K562 (cell line): ENCODE measurements at regions of chr20 and their contacts with region 1.

Region 1: GRCh38 chr20:13898011-13898612 is 92.3 kb downstream of the SEL1L2 start:
- DNase-seq: peak in 2 of 4 experiments; percentile 15 to 21
- ATAC-seq: peak; percentile 84
- H3K4me3 ChIP-seq: no peak overlapping the region
- H3K27ac ChIP-seq: no peak overlapping the region
- H3K4me1 ChIP-seq: no peaks in the 10 kb centered on the region; a peak in 1 of 5 replicates
- H3K27me3 ChIP-seq: no peaks in the 10 kb centered on the region
- CTCF ChIP-seq: peak; percentile 33 to 47 (median 42); a peak in 3 of 6 replicates
- EP300 ChIP-seq: no peak
- POLR2A ChIP-seq: no peak
- RAD21 ChIP-seq: peak; percentile 45 to 53

Region 2: GRCh38 chr20:13831476-13831875 is 66.6 kb before region 1 on chr20:
- CTCF ChIA-PET with region 1: no interaction called
- POLR2A ChIA-PET with region 1: no interaction called
- in situ Hi-C with region 1: no loop called
- intact Hi-C with region 1: no loop called
- DNase-seq: no peak
- ATAC-seq: no peak
- H3K4me3 ChIP-seq: no peak overlapping the region
- H3K27ac ChIP-seq: no peak overlapping the region
- H3K4me1 ChIP-seq: no peaks in the 10 kb centered on the region
- H3K27me3 ChIP-seq: no peaks in the 10 kb centered on the region
- CTCF ChIP-seq: no peak
- EP300 ChIP-seq: no peak
- POLR2A ChIP-seq: no peak
- RAD21 ChIP-seq: no peak

Region 3: DNA sequence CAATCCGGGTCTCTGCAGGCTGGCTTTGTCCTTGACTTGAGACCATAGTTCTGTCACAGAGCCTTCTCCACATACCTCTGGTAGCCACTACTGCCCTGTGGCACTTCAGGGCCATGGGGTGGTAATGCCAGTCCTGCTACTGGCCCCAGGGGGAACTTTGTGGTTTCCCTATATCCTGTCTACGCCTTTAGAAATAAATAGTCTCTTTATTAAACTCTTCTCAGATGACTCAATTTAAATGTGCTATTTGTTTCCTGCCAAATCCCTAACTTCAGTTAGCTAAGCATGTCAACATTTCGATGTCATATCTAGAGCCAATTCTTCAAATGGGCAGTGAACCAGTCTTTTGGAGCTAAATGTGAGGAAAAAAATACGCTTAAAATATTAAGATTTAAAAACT is 32.2 kb after region 1 on chr20:
- CTCF ChIA-PET with region 1: no interaction called
- POLR2A ChIA-PET with region 1: no interaction called
- in situ Hi-C with region 1: no loop called
- intact Hi-C with region 1: no loop called
- DNase-seq: no peak
- ATAC-seq: no peak
- H3K4me3 ChIP-seq: no peak overlapping the region
- H3K27ac ChIP-seq: no peak overlapping the region
- H3K4me1 ChIP-seq: no peaks in the 10 kb centered on the region; a peak in 2 of 5 replicates
- H3K27me3 ChIP-seq: no peaks in the 10 kb centered on the region
- CTCF ChIP-seq: no peak
- EP300 ChIP-seq: no peak
- POLR2A ChIP-seq: no peak
- RAD21 ChIP-seq: no peak

Region 4: DNA sequence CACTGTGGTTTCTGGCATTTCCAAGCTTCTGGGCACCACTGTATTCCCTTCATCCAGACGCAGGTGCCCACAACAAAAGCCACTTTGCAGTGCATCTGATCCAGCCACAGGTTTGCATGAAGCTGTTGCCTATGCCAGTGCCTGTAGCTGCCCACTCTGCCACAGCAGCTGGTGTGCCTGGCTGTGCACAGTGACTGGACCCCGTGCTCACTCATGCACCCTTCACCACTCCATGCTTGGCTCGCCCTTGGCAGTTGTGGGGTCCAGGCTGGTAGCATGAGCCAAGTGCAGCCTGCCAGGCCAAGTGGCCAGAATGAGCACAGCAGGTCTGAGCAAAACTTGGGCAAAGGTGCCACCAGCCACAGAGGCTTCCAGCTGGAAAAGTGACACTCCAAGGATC is 49.6 kb after region 1 on chr20:
- CTCF ChIA-PET with region 1: no interaction called
- POLR2A ChIA-PET with region 1: no interaction called
- in situ Hi-C with region 1: loop called (anchors 5 kb)
- intact Hi-C with region 1: no loop called
- DNase-seq: no peak
- ATAC-seq: no peak
- H3K4me3 ChIP-seq: no peak overlapping the region
- H3K27ac ChIP-seq: no peak overlapping the region
- H3K4me1 ChIP-seq: no peaks in the 10 kb centered on the region
- H3K27me3 ChIP-seq: no peaks in the 10 kb centered on the region
- CTCF ChIP-seq: no peak
- EP300 ChIP-seq: no peak
- POLR2A ChIP-seq: no peak
- RAD21 ChIP-seq: no peak